K562 (cell line): ENCODE measurements at regions of chr13 and their contacts with region 1.

Region 1: DNA sequence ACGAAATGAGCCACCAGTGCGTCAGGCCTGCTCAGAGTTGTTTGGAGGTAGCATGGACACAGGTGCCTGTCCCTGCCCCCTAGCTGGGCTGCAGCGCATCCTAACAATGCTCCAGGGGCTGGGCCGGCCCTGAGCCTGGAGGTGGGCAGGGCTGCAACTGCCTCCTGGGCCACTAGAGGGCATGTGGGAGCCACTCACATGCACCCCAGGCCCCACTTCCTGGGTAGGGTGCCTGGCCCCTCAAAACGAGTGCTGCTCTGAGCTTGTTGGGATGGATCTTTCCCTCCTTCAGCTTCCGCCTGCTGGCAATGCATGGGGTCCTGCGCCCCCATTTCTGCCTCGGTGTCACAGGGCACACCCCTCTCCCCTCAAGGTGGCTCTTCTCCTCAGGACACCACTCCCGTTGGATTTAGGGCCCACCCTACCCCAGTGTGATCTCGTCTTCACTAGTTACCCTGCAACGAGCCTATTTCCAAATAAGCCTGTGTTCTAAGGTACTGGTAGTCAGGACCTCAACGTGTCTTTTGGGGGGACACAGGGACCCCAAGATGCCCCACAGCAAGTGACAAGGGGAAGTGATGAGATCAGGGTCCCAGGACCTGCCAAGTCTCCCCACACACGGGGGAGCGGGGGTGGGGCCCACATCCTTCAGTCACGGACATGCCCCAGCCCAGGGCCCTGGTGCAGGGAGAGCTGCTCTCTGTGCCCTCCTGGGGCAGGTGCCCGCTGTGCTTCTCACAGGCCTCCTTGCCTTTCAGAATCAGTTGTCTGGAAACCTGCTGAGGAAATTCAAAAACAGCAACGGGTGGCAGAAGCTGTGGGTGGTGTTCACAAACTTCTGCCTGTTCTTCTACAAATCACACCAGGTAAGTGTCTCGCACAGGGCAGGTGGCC is 131.3 kb downstream of the STK24 start:
- DNase-seq: peak; percentile 71 to 84 (median 80)
- ATAC-seq: peak; percentile 96
- H3K4me3 ChIP-seq: no peak overlapping the region
- H3K27ac ChIP-seq: no peak overlapping the region
- H3K4me1 ChIP-seq: peaks cover 0 to 11% of the 10 kb centered on the region in 2 experiments; a peak in 2 of 5 replicates
- H3K27me3 ChIP-seq: peaks cover 6 to 38% of the 10 kb centered on the region in 2 experiments
- CTCF ChIP-seq: peak; percentile 83 to 84 (median 84)
- EP300 ChIP-seq: no peak
- POLR2A ChIP-seq: no peak
- RAD21 ChIP-seq: peak; percentile 71 to 86

Region 2: GRCh38 chr13:98239162-98240076 is 206.2 kb before region 1 on chr13:
- CTCF ChIA-PET with region 1: no interaction called
- POLR2A ChIA-PET with region 1: no interaction called
- in situ Hi-C with region 1: no loop called
- intact Hi-C with region 1: no loop called
- DNase-seq: no peak
- ATAC-seq: no peak
- H3K4me3 ChIP-seq: no peak overlapping the region
- H3K27ac ChIP-seq: no peak overlapping the region
- H3K4me1 ChIP-seq: no peaks in the 10 kb centered on the region
- H3K27me3 ChIP-seq: peaks cover 3 to 7% of the 10 kb centered on the region in 2 experiments; a peak in 1 of 5 replicates
- CTCF ChIP-seq: no peak
- EP300 ChIP-seq: no peak
- POLR2A ChIP-seq: no peak
- RAD21 ChIP-seq: no peak

Region 3: DNA sequence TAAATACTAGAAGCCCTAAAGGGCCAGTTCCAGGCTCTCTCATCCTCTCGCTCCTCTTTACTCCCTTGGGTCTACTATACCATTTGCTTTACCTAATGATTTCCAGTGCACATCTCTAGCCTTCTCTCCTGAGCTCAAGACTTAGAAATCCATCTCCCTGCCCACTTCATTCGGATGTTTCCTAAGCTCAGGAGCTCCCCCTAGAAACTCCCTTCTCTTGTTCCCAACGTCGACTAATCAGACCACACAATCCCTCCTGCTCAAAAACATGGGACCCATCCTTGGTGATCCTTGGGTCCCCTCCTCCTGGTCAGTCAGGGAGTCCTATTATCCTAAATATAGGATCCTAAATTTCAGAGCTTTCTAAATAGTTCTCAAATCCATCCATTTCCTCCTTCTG is 152.5 kb after region 1 on chr13:
- CTCF ChIA-PET with region 1: no interaction called
- POLR2A ChIA-PET with region 1: no interaction called
- in situ Hi-C with region 1: no loop called
- intact Hi-C with region 1: loop called (anchors 5 kb)
- DNase-seq: peak in 1 of 4 experiments; percentile 15
- ATAC-seq: peak; percentile 33; the same call in 1 of the 3 replicates
- H3K4me3 ChIP-seq: no peak overlapping the region
- H3K27ac ChIP-seq: no peak overlapping the region
- H3K4me1 ChIP-seq: no peaks in the 10 kb centered on the region
- H3K27me3 ChIP-seq: peaks cover 0 to 3% of the 10 kb centered on the region in 2 experiments; a peak in 1 of 5 replicates
- CTCF ChIP-seq: peak in 2 of 3 experiments; percentile 28 to 46; a peak in 2 of 6 replicates
- EP300 ChIP-seq: no peak
- POLR2A ChIP-seq: no peak
- RAD21 ChIP-seq: peak in 1 of 2 experiments; percentile 54; a peak in 2 of 4 replicates

Region 4: GRCh38 chr13:98653463-98653985 is 207.9 kb after region 1 on chr13:
- CTCF ChIA-PET with region 1: interaction called, 5 read pairs
- POLR2A ChIA-PET with region 1: interaction called, 5 read pairs
- in situ Hi-C with region 1: loop called (anchors 5 kb)
- intact Hi-C with region 1: loop called (anchors 1 kb)
- DNase-seq: peak; percentile 65 to 68 (median 66)
- ATAC-seq: peak; percentile 97
- H3K4me3 ChIP-seq: no peak overlapping the region
- H3K27ac ChIP-seq: no peak overlapping the region
- H3K4me1 ChIP-seq: no peaks in the 10 kb centered on the region
- H3K27me3 ChIP-seq: peaks cover 11 to 45% of the 10 kb centered on the region in 2 experiments; a peak in 4 of 5 replicates
- CTCF ChIP-seq: peak; percentile 75 to 77 (median 75)
- EP300 ChIP-seq: no peak
- POLR2A ChIP-seq: no peak
- RAD21 ChIP-seq: peak; percentile 64 to 79

Region 5: GRCh38 chr13:98842864-98843481 is 397.4 kb after region 1 on chr13:
- CTCF ChIA-PET with region 1: no interaction called
- POLR2A ChIA-PET with region 1: no interaction called
- in situ Hi-C with region 1: no loop called
- intact Hi-C with region 1: loop called (anchors 5 kb)
- DNase-seq: peak; percentile 48 to 71 (median 56)
- ATAC-seq: peak; percentile 90
- H3K4me3 ChIP-seq: no peak overlapping the region
- H3K27ac ChIP-seq: no peak overlapping the region
- H3K4me1 ChIP-seq: peaks cover 0 to 4% of the 10 kb centered on the region in 2 experiments; a peak in 1 of 5 replicates
- H3K27me3 ChIP-seq: no peaks in the 10 kb centered on the region
- CTCF ChIP-seq: peak; percentile 67 to 82 (median 77)
- EP300 ChIP-seq: no peak
- POLR2A ChIP-seq: no peak
- RAD21 ChIP-seq: peak; percentile 57 to 64